ENCODE measurements at regions of chr14 and their contacts with region 1.

Region 1: GRCh38 chr14:103811189-103811588 is 36.2 kb downstream of the PPP1R13B start:
- DNase-seq: no peak
- H3K4me3 ChIP-seq: no peak overlapping the region
- H3K27ac ChIP-seq: no peak overlapping the region
- H3K4me1 ChIP-seq: no peaks in the 10 kb centered on the region
- H3K27me3 ChIP-seq: no peaks in the 10 kb centered on the region
- CTCF ChIP-seq: no peak
- POLR2A ChIP-seq: no peak

Region 2: GRCh38 chr14:103136388-103137271 is 674.6 kb before region 1 on chr14:
- intact Hi-C with region 1: loop called (anchors 5 kb)
- DNase-seq: no peak
- H3K4me3 ChIP-seq: no peak overlapping the region
- H3K27ac ChIP-seq: peak overlapping the region in 1 of 2 donors; percentile 35
- H3K4me1 ChIP-seq: peaks cover 8 to 15% of the 10 kb centered on the region in 2 donors
- H3K27me3 ChIP-seq: no peaks in the 10 kb centered on the region
- CTCF ChIP-seq: no peak
- POLR2A ChIP-seq: no peak

Region 3: GRCh38 chr14:103847451-103848188 is 36.4 kb after region 1 on chr14 and contains the start of gene PPP1R13B:
- intact Hi-C with region 1: no loop called
- DNase-seq: peak; percentile 89 to 94
- H3K4me3 ChIP-seq: peak within 1 kb of the TSS; percentile 58 to 95 (median 81)
- H3K27ac ChIP-seq: peak within 1 kb of the TSS; percentile 88 to 94
- H3K4me1 ChIP-seq: peaks cover 0 to 6% of the 10 kb centered on the region in 2 donors
- H3K27me3 ChIP-seq: no peaks in the 10 kb centered on the region
- CTCF ChIP-seq: no peak
- POLR2A ChIP-seq: no peak
- total RNA-seq, gene PPP1R13B: 6.4 to 21.8 (median 18.4) TPM

Measured in breast epithelium (tissue), 4 donors.